Psoas muscle (tissue), 8 donors: ENCODE measurements at regions of chr7 and their contacts with region 1.

Region 1: DNA sequence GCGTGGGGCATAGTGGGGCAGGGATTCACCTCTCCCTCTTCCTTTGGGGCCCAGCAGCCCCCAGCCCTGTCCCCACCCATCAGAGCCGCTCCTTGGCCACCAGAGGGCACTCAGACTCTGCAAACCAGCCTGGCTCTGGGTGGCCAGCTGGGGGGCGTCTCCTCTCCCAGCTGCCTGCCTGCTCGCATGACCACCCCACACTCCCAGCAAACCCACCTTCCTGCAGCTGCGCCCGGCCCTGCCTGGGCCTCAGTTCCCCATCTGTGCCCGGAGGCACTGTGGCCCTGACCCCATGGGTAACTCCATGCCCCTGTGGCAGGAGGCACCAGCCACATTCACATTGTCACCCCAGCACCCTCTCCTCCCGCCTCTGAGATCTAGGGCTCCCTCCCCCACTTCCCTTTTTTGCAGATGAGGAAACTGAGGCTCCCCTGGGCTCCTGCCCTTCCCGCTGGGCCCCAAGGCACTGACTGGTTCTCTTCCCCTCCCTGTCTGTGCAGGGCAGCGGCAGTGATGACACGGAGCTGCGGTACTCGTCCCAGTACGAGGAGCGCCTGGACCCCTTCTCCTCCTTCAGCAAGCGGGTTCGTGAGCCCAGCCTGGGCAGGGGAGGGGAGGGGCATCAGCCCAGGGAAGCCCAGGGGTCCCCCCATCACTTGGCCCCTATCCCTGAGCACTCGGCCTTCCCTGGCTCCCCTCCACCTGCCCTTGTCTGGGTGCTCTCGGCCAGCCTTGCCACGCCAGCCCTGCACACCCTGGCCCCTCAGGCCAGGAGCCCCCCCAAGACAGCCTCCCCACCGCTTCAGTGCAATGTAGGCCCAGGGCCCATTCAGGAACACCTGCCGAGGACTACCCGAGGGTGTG is 6.9 kb upstream of the SH2B2 start:
- DNase-seq: peak in 1 of 2 donors; percentile 80
- ATAC-seq: peak; percentile 78 to 94 (median 84)
- H3K4me3 ChIP-seq: no peak overlapping the region
- H3K27ac ChIP-seq: no peak overlapping the region
- H3K4me1 ChIP-seq: no peaks in the 10 kb centered on the region
- H3K27me3 ChIP-seq: no peaks in the 10 kb centered on the region
- CTCF ChIP-seq: peak; percentile 86

Region 2: GRCh38 chr7:102220960-102221800 is 58.6 kb before region 1 on chr7:
- intact Hi-C with region 1: no loop called
- DNase-seq: no peak
- ATAC-seq: no peak
- H3K4me3 ChIP-seq: no peak overlapping the region
- H3K27ac ChIP-seq: no peak overlapping the region
- H3K4me1 ChIP-seq: no peaks in the 10 kb centered on the region
- H3K27me3 ChIP-seq: no peaks in the 10 kb centered on the region
- CTCF ChIP-seq: no peak

Region 3: DNA sequence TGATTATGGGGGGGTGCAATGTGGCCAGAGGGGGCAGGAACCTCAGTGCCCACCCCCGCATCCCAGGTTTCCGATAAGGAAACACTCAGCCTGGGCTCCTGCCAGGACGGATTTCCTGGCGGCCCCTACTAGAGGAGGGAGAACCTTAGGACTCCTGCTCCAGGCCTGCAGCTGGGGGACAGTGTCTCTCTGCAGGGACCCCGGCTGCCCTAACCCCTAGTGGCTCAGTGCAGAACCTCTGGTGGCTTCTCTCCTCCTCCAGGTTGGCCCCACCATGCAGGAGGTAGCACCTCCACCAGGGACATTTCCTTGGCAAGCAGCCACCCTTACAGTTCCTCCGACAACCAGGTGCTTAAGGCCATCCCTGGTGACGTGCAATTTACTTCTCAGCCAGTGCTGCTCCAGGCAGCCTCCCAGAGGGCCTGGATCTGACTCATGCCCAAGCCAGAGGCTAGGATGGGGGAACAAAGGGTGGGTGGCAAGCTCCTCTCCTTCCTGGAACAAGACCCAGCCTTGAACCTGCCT is 38.8 kb after region 1 on chr7:
- intact Hi-C with region 1: loop called in 1 of 2 experiments (anchors 5 kb)
- DNase-seq: no peak
- ATAC-seq: peak; percentile 28 to 43 (median 36)
- H3K4me3 ChIP-seq: no peak overlapping the region
- H3K27ac ChIP-seq: no peak overlapping the region
- H3K4me1 ChIP-seq: no peaks in the 10 kb centered on the region
- H3K27me3 ChIP-seq: no peaks in the 10 kb centered on the region
- CTCF ChIP-seq: no peak

Region 4: GRCh38 chr7:102390697-102391484 is 111.1 kb after region 1 on chr7:
- intact Hi-C with region 1: loop called (anchors 1 kb)
- DNase-seq: peak; percentile 84 to 92
- ATAC-seq: peak; percentile 87 to 91 (median 88)
- H3K4me3 ChIP-seq: no peak overlapping the region
- H3K27ac ChIP-seq: no peak overlapping the region
- H3K4me1 ChIP-seq: peaks cover 4% of the 10 kb centered on the region
- H3K27me3 ChIP-seq: no peaks in the 10 kb centered on the region
- CTCF ChIP-seq: peak; percentile 96